ENCODE measurements at regions of chr7 and their contacts with region 1.

Region 1: DNA sequence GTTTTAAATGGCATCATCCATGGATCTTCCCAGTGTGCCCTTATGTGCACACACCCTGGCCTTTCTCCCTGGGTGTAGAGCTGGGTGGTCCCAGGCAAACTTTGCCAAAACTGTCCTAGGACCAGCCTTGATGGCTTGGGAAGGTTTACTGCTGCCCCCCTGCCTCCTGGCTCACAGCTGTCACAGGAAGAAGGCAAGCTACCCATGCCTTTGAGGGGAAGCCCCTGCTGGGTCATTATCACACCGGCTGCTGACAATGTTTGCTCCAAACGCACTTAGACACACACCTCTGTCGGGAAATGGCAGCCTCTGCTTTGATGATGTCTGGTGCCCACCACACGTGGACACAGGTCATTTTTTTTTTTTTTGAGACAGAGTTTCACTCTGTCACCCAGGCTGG is 25.2 kb upstream of the FIGNL1 start:
- DNase-seq: no peak
- H3K4me3 ChIP-seq: no peak overlapping the region
- H3K27ac ChIP-seq: no peak overlapping the region
- H3K4me1 ChIP-seq: peaks cover 0 to 13% (median 4%) of the 10 kb centered on the region in 3 donors
- H3K27me3 ChIP-seq: no peaks in the 10 kb centered on the region
- CTCF ChIP-seq: no peak
- POLR2A ChIP-seq: no peak

Region 2: GRCh38 chr7:49707891-49708290 is 767.4 kb before region 1 on chr7:
- intact Hi-C with region 1: no loop called
- DNase-seq: no peak
- H3K4me3 ChIP-seq: no peak overlapping the region
- H3K27ac ChIP-seq: no peak overlapping the region
- H3K4me1 ChIP-seq: no peaks in the 10 kb centered on the region
- H3K27me3 ChIP-seq: no peaks in the 10 kb centered on the region
- CTCF ChIP-seq: no peak
- POLR2A ChIP-seq: no peak

Region 3: DNA sequence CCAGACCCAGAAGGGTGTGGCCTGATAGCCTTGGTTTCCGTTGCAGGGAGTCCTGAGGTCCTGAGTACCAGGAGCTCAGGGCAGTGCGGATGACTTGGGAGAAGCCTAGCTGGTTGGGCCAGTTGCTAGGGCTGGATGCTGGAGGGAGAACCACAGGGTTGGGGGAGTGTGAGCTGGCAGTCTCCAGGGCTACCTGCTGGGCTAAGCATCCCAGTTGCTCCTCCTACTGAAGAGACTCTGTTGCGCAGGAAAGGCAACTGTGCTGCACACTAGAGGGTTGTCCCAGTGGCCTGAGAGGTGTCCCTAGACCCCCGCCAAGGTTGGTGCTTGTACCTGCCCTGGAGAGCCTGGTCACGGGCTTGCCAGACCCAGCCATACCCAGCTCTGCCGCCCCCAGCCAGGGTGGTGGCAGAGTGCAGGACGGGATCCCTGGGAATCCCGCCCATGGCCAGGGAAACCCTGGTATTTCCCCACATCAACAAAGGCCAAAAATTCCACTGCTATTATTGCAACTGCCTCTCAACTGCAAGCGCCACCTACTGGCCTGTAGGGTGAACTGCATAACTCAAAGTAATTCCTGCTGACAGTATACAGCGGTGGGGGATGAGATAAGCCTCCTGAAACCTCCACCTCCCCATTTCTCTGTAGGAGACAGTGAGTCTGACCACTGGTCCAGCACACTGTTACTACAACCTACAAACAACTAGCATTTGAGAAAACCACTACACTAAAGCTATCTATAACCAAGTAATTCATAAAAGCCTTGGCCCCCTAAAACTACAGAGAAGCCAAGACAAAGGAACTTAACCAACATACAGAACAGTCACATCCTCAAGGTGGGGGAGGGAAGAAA is 157.4 kb after region 1 on chr7:
- intact Hi-C with region 1: loop called (anchors 5 kb)
- DNase-seq: no peak
- H3K4me3 ChIP-seq: no peak overlapping the region
- H3K27ac ChIP-seq: no peak overlapping the region
- H3K4me1 ChIP-seq: peaks cover 0 to 11% (median 0%) of the 10 kb centered on the region in 3 donors
- H3K27me3 ChIP-seq: no peaks in the 10 kb centered on the region
- CTCF ChIP-seq: peak; percentile 72 to 82 (median 78)
- POLR2A ChIP-seq: no peak

Region 4: GRCh38 chr7:51141451-51142003 is 666.2 kb after region 1 on chr7:
- intact Hi-C with region 1: loop called (anchors 10 kb)
- DNase-seq: no peak
- H3K4me3 ChIP-seq: no peak overlapping the region
- H3K27ac ChIP-seq: peak overlapping the region in 2 of 4 donors; percentile 4 to 23
- H3K4me1 ChIP-seq: peaks cover 8 to 62% (median 14%) of the 10 kb centered on the region in 3 donors
- H3K27me3 ChIP-seq: no peaks in the 10 kb centered on the region
- CTCF ChIP-seq: peak in 5 of 6 experiments; percentile 35 to 53 (median 45)
- POLR2A ChIP-seq: no peak